BJ (cell line): ENCODE measurements at regions of chr2 and their contacts with region 1.

Region 1: DNA sequence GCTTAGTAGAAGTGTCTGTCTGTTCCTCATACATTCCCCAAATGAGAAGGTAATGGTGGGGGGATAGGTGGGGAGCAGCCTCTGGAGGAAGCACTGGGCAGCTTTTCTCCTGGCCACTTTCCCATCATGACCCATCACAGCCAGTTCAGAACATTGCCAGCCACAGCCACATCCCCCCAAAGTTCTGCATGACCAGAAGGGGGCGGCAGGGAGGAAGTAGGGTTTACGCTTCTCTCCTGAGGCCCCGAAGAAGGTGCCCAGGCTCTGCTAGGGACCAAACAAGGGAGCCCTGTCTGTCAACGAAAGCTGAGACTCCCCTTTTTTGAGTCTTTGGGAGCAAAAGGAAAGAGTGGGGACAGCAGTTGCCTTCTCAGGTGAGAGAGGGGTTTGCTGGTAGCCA is 7.7 kb downstream of the IGFBP5 start:
- DNase-seq: no peak
- H3K4me3 ChIP-seq: no peak overlapping the region
- H3K27me3 ChIP-seq: no peaks in the 10 kb centered on the region
- CTCF ChIP-seq: peak; percentile 45

Region 2: DNA sequence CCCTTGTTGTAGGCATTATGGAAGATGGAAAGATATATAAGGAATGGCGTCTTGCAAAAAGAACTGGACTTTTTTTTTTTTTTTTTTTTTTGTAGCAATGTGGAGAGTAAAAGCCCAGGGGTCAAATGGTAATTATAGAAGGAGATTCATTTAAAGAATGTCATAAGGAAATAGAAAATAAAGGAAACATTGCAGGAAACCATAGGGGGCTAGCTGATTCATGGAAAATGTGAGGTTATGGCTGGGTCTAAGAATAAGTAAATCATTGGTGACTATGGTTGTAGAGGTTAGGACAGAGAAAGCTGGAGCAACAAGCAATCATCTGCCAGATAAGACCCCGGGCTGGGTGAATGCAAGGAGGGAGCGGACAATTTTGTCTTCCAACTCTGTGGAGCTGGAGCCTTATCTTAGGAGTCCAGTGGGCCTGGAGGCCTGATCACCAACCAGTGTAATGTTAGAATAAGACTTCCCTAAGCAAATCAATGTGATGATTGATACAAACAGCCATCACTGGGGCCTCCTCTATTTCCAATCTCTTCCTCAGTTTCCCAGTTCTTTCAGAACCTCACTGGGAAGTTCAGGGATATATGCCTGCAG is 373.4 kb after region 1 on chr2:
- CTCF ChIA-PET with region 1: interaction called, 3 read pairs
- POLR2A ChIA-PET with region 1: interaction called, 14 read pairs
- DNase-seq: no peak
- H3K4me3 ChIP-seq: no peak overlapping the region
- H3K27me3 ChIP-seq: no peaks in the 10 kb centered on the region
- CTCF ChIP-seq: no peak

Region 3: DNA sequence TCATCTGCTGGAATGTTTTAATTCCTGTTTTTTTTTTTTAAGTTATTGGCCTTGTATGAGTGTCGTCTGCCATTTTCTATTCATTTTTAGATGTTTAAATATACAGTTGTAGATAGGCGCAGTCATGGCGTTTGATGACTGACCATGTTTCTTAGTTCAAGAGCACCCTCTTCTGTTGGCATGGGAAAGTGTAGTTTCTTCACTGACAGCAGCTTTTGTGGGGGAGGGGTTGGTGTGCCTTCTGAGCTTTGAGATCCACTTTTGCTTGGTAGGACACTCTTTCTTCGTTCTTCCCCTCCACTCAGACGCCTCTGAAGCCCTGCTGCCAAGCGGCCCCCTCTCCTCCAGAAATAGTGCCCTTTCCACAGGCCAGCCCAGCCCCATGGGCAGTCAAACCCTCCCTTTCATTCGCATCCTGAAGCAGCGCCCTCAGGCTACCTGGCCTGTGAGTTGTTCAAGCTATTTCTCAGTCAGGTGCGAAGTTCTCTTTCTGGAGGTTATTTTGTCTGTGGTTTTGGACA is 823.2 kb after region 1 on chr2:
- CTCF ChIA-PET with region 1: interaction called, 15 read pairs
- POLR2A ChIA-PET with region 1: no interaction called
- DNase-seq: peak; percentile 38
- H3K4me3 ChIP-seq: no peak overlapping the region
- H3K27me3 ChIP-seq: no peaks in the 10 kb centered on the region
- CTCF ChIP-seq: peak; percentile 80

Region 4: GRCh38 chr2:217756375-217757107 is 1068.9 kb after region 1 on chr2:
- CTCF ChIA-PET with region 1: interaction called, 11 read pairs
- POLR2A ChIA-PET with region 1: no interaction called
- DNase-seq: no peak
- H3K4me3 ChIP-seq: no peak overlapping the region
- H3K27me3 ChIP-seq: no peaks in the 10 kb centered on the region
- CTCF ChIP-seq: peak; percentile 97